ENCODE measurements at regions of chr18 and their contacts with region 1.

Region 1: GRCh38 chr18:13112982-13113381 is 105.6 kb upstream of the LDLRAD4 start:
- DNase-seq: peak; percentile 16
- H3K4me3 Mint-ChIP-seq: no peak overlapping the region
- H3K27ac Mint-ChIP-seq: no peak overlapping the region
- H3K4me1 Mint-ChIP-seq: no peaks in the 10 kb centered on the region
- H3K27me3 Mint-ChIP-seq: no peaks in the 10 kb centered on the region
- CTCF ChIP-seq: no peak

Region 2: DNA sequence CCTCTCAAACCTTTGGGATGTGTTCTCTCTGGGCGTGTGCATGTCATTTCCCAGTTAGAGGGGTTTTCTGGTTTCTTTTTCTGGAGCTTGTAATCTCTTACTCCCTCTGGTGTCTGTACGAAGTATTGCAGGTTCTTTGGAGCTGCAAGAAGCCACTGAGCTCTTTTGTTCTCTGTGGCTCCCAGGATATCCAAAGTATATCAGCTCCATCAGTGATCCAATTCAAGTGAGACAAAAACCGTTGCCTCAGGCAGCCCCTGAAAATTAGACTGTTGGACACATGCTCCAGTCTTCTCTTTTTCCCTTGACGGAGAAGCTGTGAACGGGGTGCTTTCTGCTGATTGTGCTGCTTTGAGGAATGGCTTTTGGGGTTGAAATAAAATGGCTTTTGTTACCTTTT is 46.6 kb after region 1 on chr18:
- CTCF ChIA-PET with region 1: interaction called, 11 read pairs
- intact Hi-C with region 1: no loop called
- DNase-seq: peak; percentile 58
- H3K4me3 Mint-ChIP-seq: no peak overlapping the region
- H3K27ac Mint-ChIP-seq: no peak overlapping the region
- H3K4me1 Mint-ChIP-seq: no peaks in the 10 kb centered on the region
- H3K27me3 Mint-ChIP-seq: peaks cover 49% of the 10 kb centered on the region
- CTCF ChIP-seq: peak; percentile 74

Measured in Calu3 (cell line).